CD14-positive monocyte (primary cell): ENCODE measurements at regions of chr11 and their contacts with region 1.

Region 1: GRCh38 chr11:14643697-14644225 is at the start of gene PDE3B:
- DNase-seq: peak in 2 of 3 donors; percentile 55 to 59
- H3K4me3 ChIP-seq: peak within 1 kb of the TSS; percentile 71 to 98 (median 94)
- H3K4me3 Mint-ChIP-seq: peak within 1 kb of the TSS; percentile 96
- H3K27ac ChIP-seq: peak within 1 kb of the TSS; percentile 59 to 80
- H3K27ac Mint-ChIP-seq: peak within 1 kb of the TSS; percentile 79 to 91 (median 88)
- H3K4me1 ChIP-seq: peaks cover 19 to 29% of the 10 kb centered on the region in 2 donors
- H3K4me1 Mint-ChIP-seq: peaks cover 38% of the 10 kb centered on the region
- H3K27me3 ChIP-seq: no peaks in the 10 kb centered on the region
- H3K27me3 Mint-ChIP-seq: peaks cover 0 to 2% (median 1%) of the 10 kb centered on the region in 3 donors
- CTCF ChIP-seq: no peak
- polyA plus RNA-seq, gene PDE3B: 4.0 to 6.0 (median 5.2) TPM

Region 2: GRCh38 chr11:14537134-14537599 is 106.6 kb before region 1 on chr11:
- intact Hi-C with region 1: loop called (anchors 5 to 10 kb)
- DNase-seq: peak; percentile 37 to 70 (median 69)
- H3K4me3 ChIP-seq: peak overlapping the region; percentile 21 to 67 (median 49)
- H3K4me3 Mint-ChIP-seq: peak overlapping the region; percentile 51 to 59
- H3K27ac ChIP-seq: peak overlapping the region in 1 of 2 donors; percentile 86
- H3K27ac Mint-ChIP-seq: peak overlapping the region; percentile 79 to 92 (median 89)
- H3K4me1 ChIP-seq: peaks cover 34 to 41% of the 10 kb centered on the region in 2 donors
- H3K4me1 Mint-ChIP-seq: peaks cover 33% of the 10 kb centered on the region
- H3K27me3 ChIP-seq: no peaks in the 10 kb centered on the region
- H3K27me3 Mint-ChIP-seq: no peaks in the 10 kb centered on the region
- CTCF ChIP-seq: peak; percentile 87

Region 3: DNA sequence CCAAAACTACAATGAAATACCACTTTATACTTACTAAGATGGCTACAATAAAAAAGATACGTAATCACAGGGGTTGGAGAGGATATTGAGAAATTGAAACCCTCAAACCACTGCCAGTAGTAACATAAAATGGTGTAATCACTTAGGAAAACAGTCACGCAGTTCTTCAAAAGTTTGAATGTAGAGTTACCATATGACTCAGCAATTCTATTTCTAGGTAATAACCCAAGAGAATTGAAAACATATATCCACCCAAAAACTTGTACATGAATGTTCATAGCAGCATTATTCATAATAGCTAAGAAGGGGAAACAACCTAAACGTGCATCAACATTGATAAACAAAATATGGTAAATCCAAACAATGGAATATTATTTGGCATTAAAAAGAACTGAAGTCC is 99.2 kb before region 1 on chr11:
- intact Hi-C with region 1: loop called (anchors 5 to 10 kb)
- DNase-seq: peak; percentile 73 to 95 (median 93)
- H3K4me3 ChIP-seq: peak overlapping the region in 1 of 3 experiments; percentile 21
- H3K4me3 Mint-ChIP-seq: no peak overlapping the region
- H3K27ac ChIP-seq: peak overlapping the region in 1 of 2 donors; percentile 92
- H3K27ac Mint-ChIP-seq: peak overlapping the region; percentile 82 to 94 (median 90)
- H3K4me1 ChIP-seq: peaks cover 53 to 62% of the 10 kb centered on the region in 2 donors
- H3K4me1 Mint-ChIP-seq: peaks cover 55% of the 10 kb centered on the region
- H3K27me3 ChIP-seq: no peaks in the 10 kb centered on the region
- H3K27me3 Mint-ChIP-seq: no peaks in the 10 kb centered on the region
- CTCF ChIP-seq: no peak